Activated CD8-positive, alpha-beta memory T cell treated with anti-CD3 and anti-CD28 coated beads, Interleukin-2, amount 10 ng/mL, durations not matched to agents 7 days and 5 days (primary cell): ENCODE measurements at regions of chr12 and their contacts with region 1.

Region 1: DNA sequence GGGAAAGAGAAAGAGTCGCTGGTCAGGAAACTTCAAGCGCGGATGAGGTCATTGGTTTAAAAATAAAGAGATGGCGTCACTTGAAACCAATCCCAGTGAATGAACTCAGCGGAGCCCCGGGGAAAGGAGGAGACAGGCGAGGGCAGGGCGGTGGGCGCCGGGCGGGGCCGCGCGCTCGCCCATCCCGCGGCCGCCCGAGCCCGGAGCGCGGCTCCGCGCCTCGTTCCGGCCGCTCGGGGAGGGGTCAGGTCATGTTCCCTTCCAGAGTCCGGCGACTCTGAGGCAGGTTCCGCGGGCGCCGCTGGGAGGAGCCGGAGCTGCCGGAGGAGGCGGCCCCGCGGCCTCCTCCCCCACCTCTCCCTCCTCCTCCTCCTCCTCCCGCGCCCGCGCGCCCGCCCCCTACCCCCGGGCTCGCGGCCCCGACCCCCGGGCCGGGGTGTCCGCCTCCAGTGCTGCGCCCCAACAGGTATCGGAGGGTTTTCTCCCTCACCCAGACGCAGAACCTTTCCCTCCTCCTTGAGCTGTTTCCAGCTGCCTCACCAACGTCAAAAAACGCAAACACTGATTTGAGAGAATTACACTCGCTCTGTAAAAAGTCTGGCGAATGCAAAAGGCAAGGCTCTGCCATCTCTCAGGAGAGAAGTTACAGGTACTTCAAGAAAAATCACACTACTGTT is at the start of gene DUSP16:
- DNase-seq: peak; percentile 91
- ATAC-seq: peak; percentile 89
- H3K4me3 Mint-ChIP-seq: peak within 1 kb of the TSS; percentile 81
- H3K27ac Mint-ChIP-seq: peak within 1 kb of the TSS; percentile 95
- H3K4me1 Mint-ChIP-seq: peaks cover 38% of the 10 kb centered on the region
- H3K27me3 Mint-ChIP-seq: no peaks in the 10 kb centered on the region
- total RNA-seq, gene DUSP16: 43.0 to 69.0 TPM

Region 2: GRCh38 chr12:12577786-12578185 is 15.1 kb after region 1 on chr12:
- CTCF ChIA-PET with region 1: interaction called, 16 read pairs
- DNase-seq: no peak
- ATAC-seq: no peak
- H3K4me3 Mint-ChIP-seq: no peak overlapping the region
- H3K27ac Mint-ChIP-seq: no peak overlapping the region
- H3K4me1 Mint-ChIP-seq: peaks cover 18% of the 10 kb centered on the region
- H3K27me3 Mint-ChIP-seq: no peaks in the 10 kb centered on the region